PC-9 (cell line): ENCODE measurements at regions of chr2 and their contacts with region 1.

Region 1: GRCh38 chr2:155424518-155424917 is 726.0 kb downstream of the KCNJ3 start:
- DNase-seq: no peak
- H3K4me3 ChIP-seq: no peak overlapping the region
- H3K27ac ChIP-seq: no peak overlapping the region
- H3K4me1 ChIP-seq: no peaks in the 10 kb centered on the region
- H3K27me3 ChIP-seq: no peaks in the 10 kb centered on the region
- CTCF ChIP-seq: no peak

Region 2: GRCh38 chr2:154402218-154402617 is 1022.3 kb before region 1 on chr2:
- CTCF ChIA-PET with region 1: no interaction called
- POLR2A ChIA-PET with region 1: interaction called, 10 read pairs
- intact Hi-C with region 1: no loop called
- DNase-seq: no peak
- H3K4me3 ChIP-seq: no peak overlapping the region
- H3K27ac ChIP-seq: no peak overlapping the region
- H3K4me1 ChIP-seq: no peaks in the 10 kb centered on the region
- H3K27me3 ChIP-seq: no peaks in the 10 kb centered on the region
- CTCF ChIP-seq: peak; percentile 53